HCT116 (cell line): ENCODE measurements at regions of chr9 and their contacts with region 1.

Region 1: DNA sequence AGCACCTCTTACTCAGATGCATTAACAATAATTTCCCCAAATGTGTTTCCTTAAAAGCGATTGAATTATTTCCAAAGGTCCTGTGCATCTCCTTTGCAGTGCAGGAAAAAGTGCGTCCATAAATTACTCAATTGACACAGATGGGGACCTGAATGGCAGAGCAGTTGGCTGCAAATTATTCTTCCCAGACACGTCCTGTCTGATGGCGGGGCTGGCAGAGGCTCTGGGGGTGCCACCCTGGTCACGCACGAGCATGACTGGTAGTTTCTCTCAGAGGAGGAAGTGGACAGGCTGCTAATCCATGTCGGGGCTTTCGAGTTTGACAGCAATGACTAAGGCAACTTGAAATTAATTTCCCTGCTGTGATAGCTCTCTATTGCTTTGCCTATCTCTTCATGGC is 264.8 kb upstream of the BRINP1 start:
- DNase-seq: no peak
- ATAC-seq: no peak
- H3K4me3 ChIP-seq: no peak overlapping the region
- H3K27ac ChIP-seq: no peak overlapping the region
- H3K4me1 ChIP-seq: no peaks in the 10 kb centered on the region
- H3K27me3 ChIP-seq: no peaks in the 10 kb centered on the region
- CTCF ChIP-seq: no peak
- POLR2A ChIP-seq: no peak
- RAD21 ChIP-seq: no peak

Region 2: DNA sequence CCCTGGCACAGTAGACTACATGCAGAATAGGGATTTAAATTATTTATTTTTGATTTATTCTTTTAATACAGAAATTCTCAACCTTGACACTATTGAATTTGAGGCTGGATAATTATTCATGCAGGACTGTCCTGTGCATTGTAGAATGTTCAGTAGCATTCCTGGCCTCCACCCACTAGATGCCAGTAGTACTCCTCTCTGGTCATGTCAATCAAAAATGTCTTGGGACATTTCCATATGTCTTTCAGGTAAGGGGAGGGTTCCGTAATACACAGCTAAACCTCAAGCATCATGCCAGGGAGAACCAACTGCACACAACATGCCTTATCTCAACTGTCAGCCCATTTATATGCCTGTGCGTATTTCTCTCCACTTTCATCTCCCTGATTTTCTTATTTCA is 496.5 kb before region 1 on chr9:
- CTCF ChIA-PET with region 1: no interaction called
- POLR2A ChIA-PET with region 1: no interaction called
- RAD21 ChIA-PET with region 1: no interaction called
- intact Hi-C with region 1: no loop called
- DNase-seq: no peak
- ATAC-seq: no peak
- H3K4me3 ChIP-seq: no peak overlapping the region
- H3K27ac ChIP-seq: no peak overlapping the region
- H3K4me1 ChIP-seq: no peaks in the 10 kb centered on the region
- H3K27me3 ChIP-seq: no peaks in the 10 kb centered on the region
- CTCF ChIP-seq: no peak
- POLR2A ChIP-seq: no peak
- RAD21 ChIP-seq: no peak

Region 3: GRCh38 chr9:119662329-119662728 is 28.3 kb after region 1 on chr9:
- CTCF ChIA-PET with region 1: no interaction called
- POLR2A ChIA-PET with region 1: no interaction called
- RAD21 ChIA-PET with region 1: no interaction called
- intact Hi-C with region 1: loop called (anchors 2 kb)
- DNase-seq: no peak
- ATAC-seq: no peak
- H3K4me3 ChIP-seq: no peak overlapping the region
- H3K27ac ChIP-seq: no peak overlapping the region
- H3K4me1 ChIP-seq: no peaks in the 10 kb centered on the region
- H3K27me3 ChIP-seq: no peaks in the 10 kb centered on the region
- CTCF ChIP-seq: no peak
- POLR2A ChIP-seq: no peak
- RAD21 ChIP-seq: no peak

Region 4: GRCh38 chr9:119905724-119906123 is 271.7 kb after region 1 on chr9:
- CTCF ChIA-PET with region 1: no interaction called
- POLR2A ChIA-PET with region 1: no interaction called
- RAD21 ChIA-PET with region 1: no interaction called
- intact Hi-C with region 1: no loop called
- DNase-seq: no peak
- ATAC-seq: no peak
- H3K4me3 ChIP-seq: no peak overlapping the region
- H3K27ac ChIP-seq: no peak overlapping the region
- H3K4me1 ChIP-seq: no peaks in the 10 kb centered on the region
- H3K27me3 ChIP-seq: no peaks in the 10 kb centered on the region
- CTCF ChIP-seq: no peak
- POLR2A ChIP-seq: no peak
- RAD21 ChIP-seq: no peak